AG04450 (cell line): ENCODE measurements at regions of chr4 and their contacts with region 1.

Region 1: DNA sequence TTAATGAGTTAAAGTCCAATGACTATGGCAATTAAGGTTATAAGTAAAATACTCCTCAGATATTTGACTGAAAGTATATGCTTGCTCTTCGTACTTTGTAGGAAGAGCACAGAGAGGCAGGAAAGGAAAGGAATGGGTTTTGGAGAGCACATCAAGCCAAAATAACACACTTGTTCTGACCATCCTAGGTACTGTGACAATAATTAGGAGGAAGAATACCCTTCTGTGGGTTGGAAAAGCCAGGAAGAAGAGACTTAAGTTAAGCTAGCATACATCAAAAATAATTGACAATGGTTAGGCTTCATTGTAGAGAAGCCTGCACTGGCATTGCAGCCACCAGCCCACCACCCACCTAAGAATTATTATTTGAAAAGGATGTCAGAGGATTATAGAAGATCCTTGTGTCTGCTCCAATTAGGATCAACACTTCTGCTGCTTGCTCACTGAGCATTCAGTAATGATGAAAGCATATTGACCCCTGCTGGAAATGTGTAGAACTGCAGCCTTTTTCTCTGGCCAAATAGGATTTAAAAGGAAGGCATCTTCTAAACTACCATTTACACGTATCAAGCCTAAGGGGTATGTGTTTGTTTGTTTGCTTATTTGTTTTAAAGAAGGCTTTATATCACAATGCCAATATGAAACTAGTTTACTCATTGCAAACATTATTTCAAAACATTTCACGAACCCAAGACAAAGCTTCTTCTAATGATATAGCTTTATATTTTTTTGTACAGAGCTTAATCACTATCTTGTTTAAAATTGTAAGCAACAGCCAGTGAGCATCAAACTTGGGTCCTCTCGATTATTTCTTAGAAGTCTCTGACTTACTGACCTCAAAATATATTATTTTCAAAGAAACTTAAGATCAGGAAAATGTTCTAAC is 286.2 kb upstream of the TET2 start:
- DNase-seq: peak; percentile 30
- H3K4me3 ChIP-seq: no peak overlapping the region
- H3K27ac ChIP-seq: no peak overlapping the region
- H3K27me3 ChIP-seq: no peaks in the 10 kb centered on the region
- CTCF ChIP-seq: peak; percentile 89

Region 2: GRCh38 chr4:104693599-104694201 is 166.8 kb before region 1 on chr4:
- CTCF ChIA-PET with region 1: interaction called, 10 read pairs
- POLR2A ChIA-PET with region 1: no interaction called
- DNase-seq: no peak
- H3K4me3 ChIP-seq: no peak overlapping the region
- H3K27ac ChIP-seq: no peak overlapping the region
- H3K27me3 ChIP-seq: no peaks in the 10 kb centered on the region
- CTCF ChIP-seq: peak; percentile 59

Region 3: GRCh38 chr4:104848597-104849225 is 11.8 kb before region 1 on chr4:
- CTCF ChIA-PET with region 1: interaction called, 10 read pairs
- POLR2A ChIA-PET with region 1: no interaction called
- DNase-seq: no peak
- H3K4me3 ChIP-seq: no peak overlapping the region
- H3K27ac ChIP-seq: no peak overlapping the region
- H3K27me3 ChIP-seq: no peaks in the 10 kb centered on the region
- CTCF ChIP-seq: no peak

Region 4: DNA sequence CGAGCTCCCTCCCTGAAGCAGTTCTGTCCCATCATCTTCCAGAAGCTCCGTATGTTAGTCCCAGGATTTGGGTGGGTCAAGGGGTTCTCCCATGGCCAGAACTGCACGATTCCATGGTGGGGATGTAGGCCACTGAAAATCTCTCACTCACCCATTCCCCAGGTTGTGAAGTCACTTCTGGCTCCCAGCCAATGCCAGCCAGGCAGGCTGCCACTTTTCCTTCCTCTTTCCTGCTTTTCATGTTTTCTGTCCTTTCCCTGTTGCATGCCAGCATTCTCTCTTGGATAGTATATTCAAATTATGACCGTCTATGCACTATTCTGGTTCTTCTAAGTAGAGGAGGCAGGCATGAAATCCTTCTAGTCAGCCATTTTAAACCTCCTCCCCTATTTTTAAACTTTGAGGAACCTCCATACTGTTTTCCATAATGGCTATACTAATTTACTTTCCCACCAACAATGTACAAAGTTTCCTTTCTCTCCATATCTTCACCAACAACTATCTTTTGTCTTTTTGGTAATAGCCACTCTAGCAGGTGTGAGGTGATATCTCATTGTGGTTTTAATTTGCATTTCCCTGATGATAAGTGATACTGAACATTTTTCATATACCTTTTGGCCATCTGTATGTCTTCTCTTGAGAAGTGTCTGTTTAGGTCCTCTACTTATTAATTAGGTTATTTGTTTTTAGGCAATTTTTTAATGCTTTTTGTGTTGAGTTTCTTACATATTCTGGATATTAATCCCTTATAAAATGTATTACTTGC is 104.1 kb after region 1 on chr4:
- CTCF ChIA-PET with region 1: no interaction called
- POLR2A ChIA-PET with region 1: no interaction called
- DNase-seq: no peak
- H3K4me3 ChIP-seq: no peak overlapping the region
- H3K27ac ChIP-seq: no peak overlapping the region
- H3K27me3 ChIP-seq: no peaks in the 10 kb centered on the region
- CTCF ChIP-seq: no peak